ENCODE measurements at regions of chr12 and their contacts with region 1.

Region 1: GRCh38 chr12:48851883-48852733 is at the start of gene DDX23:
- DNase-seq: peak; percentile 97
- H3K4me3 ChIP-seq: peak within 1 kb of the TSS; percentile 83 to 99 (median 98)
- H3K27ac ChIP-seq: peak within 1 kb of the TSS; percentile 71
- H3K4me1 ChIP-seq: peaks cover 17% of the 10 kb centered on the region
- H3K27me3 ChIP-seq: no peaks in the 10 kb centered on the region
- CTCF ChIP-seq: no peak
- total RNA-seq, gene DDX23: 28.2 to 71.9 TPM

Region 2: GRCh38 chr12:48814262-48815125 is 37.6 kb before region 1 on chr12:
- CTCF ChIA-PET with region 1: no interaction called
- dilution Hi-C with region 1: no loop called
- in situ Hi-C with region 1: no loop called
- intact Hi-C with region 1: loop called (anchors 2 kb)
- DNase-seq: peak; percentile 73
- H3K4me3 ChIP-seq: peak overlapping the region; percentile 77 to 92 (median 92)
- H3K27ac ChIP-seq: peak overlapping the region; percentile 16
- H3K4me1 ChIP-seq: peaks cover 28% of the 10 kb centered on the region
- H3K27me3 ChIP-seq: no peaks in the 10 kb centered on the region
- CTCF ChIP-seq: peak; percentile 95 to 98

Region 3: GRCh38 chr12:48890657-48891418 is 38.7 kb after region 1 on chr12:
- CTCF ChIA-PET with region 1: interaction called, 13 read pairs
- dilution Hi-C with region 1: no loop called
- in situ Hi-C with region 1: no loop called
- intact Hi-C with region 1: loop called (anchors 1 kb)
- DNase-seq: peak; percentile 65
- H3K4me3 ChIP-seq: peak overlapping the region in 1 of 3 experiments; percentile 20
- H3K27ac ChIP-seq: no peak overlapping the region
- H3K4me1 ChIP-seq: peaks cover 4% of the 10 kb centered on the region
- H3K27me3 ChIP-seq: no peaks in the 10 kb centered on the region
- CTCF ChIP-seq: peak; percentile 79 to 95

Region 4: DNA sequence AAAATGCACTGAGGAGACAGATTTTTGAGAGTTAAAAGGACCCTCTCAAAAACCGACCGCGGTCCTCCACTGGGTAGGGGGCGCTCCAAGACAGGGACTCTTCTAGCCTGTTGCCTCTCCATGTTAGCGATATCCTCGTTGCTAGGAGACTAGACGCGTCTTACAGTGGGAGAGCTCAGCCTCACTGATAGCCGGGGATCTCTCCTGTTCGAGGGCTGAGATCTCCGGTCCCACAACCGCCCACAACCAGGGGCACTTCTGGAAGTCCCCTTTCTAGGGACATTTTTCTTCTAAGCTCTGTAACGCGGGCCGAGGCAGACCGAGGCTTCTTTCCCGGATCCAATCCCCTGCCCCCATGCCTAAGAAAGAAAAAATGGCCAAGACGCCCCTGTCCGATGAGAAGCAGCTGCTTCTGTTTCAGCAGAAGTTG is 51.9 kb after region 1 on chr12:
- CTCF ChIA-PET with region 1: no interaction called
- dilution Hi-C with region 1: no loop called
- in situ Hi-C with region 1: no loop called
- intact Hi-C with region 1: no loop called
- DNase-seq: peak; percentile 51
- H3K4me3 ChIP-seq: peak overlapping the region; percentile 34 to 43 (median 34)
- H3K27ac ChIP-seq: no peak overlapping the region
- H3K4me1 ChIP-seq: no peaks in the 10 kb centered on the region
- H3K27me3 ChIP-seq: no peaks in the 10 kb centered on the region
- CTCF ChIP-seq: peak; percentile 47 to 59

Region 5: DNA sequence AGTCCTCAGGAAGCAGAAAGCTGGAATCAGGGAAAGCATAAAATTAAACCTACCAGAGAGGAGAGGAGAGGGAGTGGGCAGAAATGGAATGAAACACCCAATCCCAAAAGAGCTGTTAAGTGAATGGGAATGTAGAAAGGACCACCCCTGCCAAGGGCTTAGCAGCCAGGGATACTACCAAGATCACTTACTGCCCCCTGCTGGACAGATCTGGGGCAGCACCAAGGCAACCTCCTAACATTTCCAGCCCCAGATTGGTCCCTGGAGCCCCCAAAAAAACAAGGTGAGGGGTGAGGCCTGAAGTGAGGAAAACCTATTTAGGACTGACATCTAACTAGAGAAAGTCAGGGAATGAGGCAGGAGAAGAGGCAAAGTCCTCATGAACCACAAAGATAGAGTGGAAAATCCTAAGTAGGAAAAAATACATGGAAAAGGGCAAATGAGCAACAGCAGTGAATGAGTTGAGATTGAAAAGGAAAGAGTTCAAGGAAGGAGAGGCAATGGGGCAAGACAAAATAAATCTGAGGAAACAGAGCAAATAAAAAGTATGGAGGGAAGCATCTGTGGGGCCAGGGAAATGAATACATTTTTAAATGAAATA is 84.4 kb after region 1 on chr12:
- CTCF ChIA-PET with region 1: no interaction called
- dilution Hi-C with region 1: no loop called
- in situ Hi-C with region 1: no loop called
- intact Hi-C with region 1: loop called (anchors 1 kb)
- DNase-seq: peak; percentile 17
- H3K4me3 ChIP-seq: no peak overlapping the region
- H3K27ac ChIP-seq: no peak overlapping the region
- H3K4me1 ChIP-seq: no peaks in the 10 kb centered on the region
- H3K27me3 ChIP-seq: no peaks in the 10 kb centered on the region
- CTCF ChIP-seq: peak; percentile 93 to 94

Region 6: GRCh38 chr12:48957141-48958048 is 105.3 kb after region 1 on chr12 and contains the start of gene ARF3:
- CTCF ChIA-PET with region 1: interaction called, 15 read pairs
- dilution Hi-C with region 1: no loop called
- in situ Hi-C with region 1: no loop called
- intact Hi-C with region 1: no loop called
- DNase-seq: peak; percentile 88
- H3K4me3 ChIP-seq: peak within 1 kb of the TSS; percentile 82 to 97 (median 96)
- H3K27ac ChIP-seq: peak within 1 kb of the TSS; percentile 78
- H3K4me1 ChIP-seq: peaks cover 28% of the 10 kb centered on the region
- H3K27me3 ChIP-seq: no peaks in the 10 kb centered on the region
- CTCF ChIP-seq: no peak
- total RNA-seq, gene ARF3: 87.9 to 201 TPM

Region 7: DNA sequence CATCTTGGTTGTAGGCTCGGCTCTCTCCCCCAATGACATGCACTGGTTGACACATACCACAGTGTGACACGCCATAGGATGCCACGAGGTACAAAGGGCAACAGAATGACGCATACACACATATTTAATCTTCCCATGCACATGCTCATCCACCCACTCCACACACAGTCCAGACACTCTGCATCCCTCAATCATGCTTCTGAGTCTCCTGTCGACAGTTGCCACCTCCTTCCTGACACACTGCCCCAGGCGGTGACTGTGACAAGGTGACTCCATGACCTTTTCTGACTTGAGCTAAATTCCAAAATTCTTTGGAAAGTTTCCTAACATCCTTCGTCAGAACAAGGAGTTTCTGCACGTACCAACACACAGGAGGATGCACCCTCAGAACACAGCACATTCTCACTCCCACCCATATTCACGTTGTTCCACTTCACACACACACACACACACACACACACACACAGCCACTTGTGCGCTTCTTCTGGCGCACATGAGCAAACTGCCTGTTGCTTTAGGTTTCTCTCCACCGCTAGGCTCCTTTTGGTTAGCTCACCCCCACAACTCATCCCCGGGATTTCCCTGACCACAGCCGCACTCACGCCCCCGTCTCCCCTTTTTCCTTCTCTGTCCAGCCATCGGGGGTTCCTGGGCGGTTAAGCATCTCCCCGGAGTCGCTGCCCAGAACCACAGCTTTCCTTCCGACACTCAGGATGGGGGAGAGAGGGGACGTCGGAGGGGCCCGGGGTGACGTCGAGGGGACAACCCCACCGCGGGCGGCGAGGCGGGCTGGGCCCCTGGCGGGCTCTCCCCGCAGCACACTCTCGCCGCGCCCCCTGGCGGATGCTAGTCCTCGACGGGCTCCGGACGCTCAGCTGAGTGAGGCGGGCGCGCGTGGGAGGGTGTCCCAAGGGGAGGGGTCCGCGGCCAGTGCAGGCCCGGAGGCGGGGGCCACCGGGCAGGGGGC is 125.5 kb after region 1 on chr12:
- CTCF ChIA-PET with region 1: interaction called, 8 read pairs
- dilution Hi-C with region 1: no loop called
- in situ Hi-C with region 1: loop called in 1 of 2 experiments (anchors 5 kb)
- intact Hi-C with region 1: loop called (anchors 1 kb)
- DNase-seq: peak; percentile 35
- H3K4me3 ChIP-seq: no peak overlapping the region
- H3K27ac ChIP-seq: no peak overlapping the region
- H3K4me1 ChIP-seq: peaks cover 36% of the 10 kb centered on the region
- H3K27me3 ChIP-seq: peaks cover 41% of the 10 kb centered on the region
- CTCF ChIP-seq: peak; percentile 50 to 83

Region 8: GRCh38 chr12:48995061-48995879 is 143.2 kb after region 1 on chr12:
- CTCF ChIA-PET with region 1: interaction called, 3 read pairs
- dilution Hi-C with region 1: no loop called
- in situ Hi-C with region 1: no loop called
- intact Hi-C with region 1: loop called (anchors 1 kb)
- DNase-seq: peak; percentile 63
- H3K4me3 ChIP-seq: peak overlapping the region in 2 of 3 experiments; percentile 21 to 26
- H3K27ac ChIP-seq: no peak overlapping the region
- H3K4me1 ChIP-seq: peaks cover 17% of the 10 kb centered on the region
- H3K27me3 ChIP-seq: no peaks in the 10 kb centered on the region
- CTCF ChIP-seq: peak; percentile 72 to 85